HCT116 (cell line): ENCODE measurements at regions of chrX and their contacts with region 1.

Region 1: GRCh38 chrX:2451501-2452316 is 49.1 kb downstream of the DHRSX start:
- DNase-seq: peak; percentile 93
- ATAC-seq: peak; percentile 72
- H3K4me3 ChIP-seq: peak overlapping the region; percentile 25 to 50
- H3K27ac ChIP-seq: peak overlapping the region; percentile 93
- H3K4me1 ChIP-seq: peaks cover 12 to 50% of the 10 kb centered on the region in 2 experiments
- H3K27me3 ChIP-seq: no peaks in the 10 kb centered on the region
- CTCF ChIP-seq: no peak
- POLR2A ChIP-seq: no peak
- RAD21 ChIP-seq: no peak

Region 2: GRCh38 chrX:1649621-1650020 is 802.1 kb before region 1 on chrX:
- CTCF ChIA-PET with region 1: no interaction called
- POLR2A ChIA-PET with region 1: no interaction called
- RAD21 ChIA-PET with region 1: no interaction called
- intact Hi-C with region 1: loop called (anchors 5 kb)
- DNase-seq: no peak
- ATAC-seq: no peak
- H3K4me3 ChIP-seq: no peak overlapping the region
- H3K27ac ChIP-seq: no peak overlapping the region
- H3K4me1 ChIP-seq: peaks cover 0 to 2% of the 10 kb centered on the region in 2 experiments; a peak in 1 of 4 replicates
- H3K27me3 ChIP-seq: no peaks in the 10 kb centered on the region
- CTCF ChIP-seq: no peak
- POLR2A ChIP-seq: no peak
- RAD21 ChIP-seq: no peak

Region 3: GRCh38 chrX:1673337-1673736 is 778.4 kb before region 1 on chrX:
- CTCF ChIA-PET with region 1: no interaction called
- POLR2A ChIA-PET with region 1: no interaction called
- RAD21 ChIA-PET with region 1: no interaction called
- intact Hi-C with region 1: loop called (anchors 5 kb)
- DNase-seq: peak; percentile 46
- ATAC-seq: peak; percentile 77
- H3K4me3 ChIP-seq: no peak overlapping the region
- H3K27ac ChIP-seq: no peak overlapping the region
- H3K4me1 ChIP-seq: no peaks in the 10 kb centered on the region
- H3K27me3 ChIP-seq: no peaks in the 10 kb centered on the region
- CTCF ChIP-seq: peak; percentile 29 to 80 (median 72); a peak in 5 of 6 replicates
- POLR2A ChIP-seq: no peak
- RAD21 ChIP-seq: peak; percentile 79

Region 4: DNA sequence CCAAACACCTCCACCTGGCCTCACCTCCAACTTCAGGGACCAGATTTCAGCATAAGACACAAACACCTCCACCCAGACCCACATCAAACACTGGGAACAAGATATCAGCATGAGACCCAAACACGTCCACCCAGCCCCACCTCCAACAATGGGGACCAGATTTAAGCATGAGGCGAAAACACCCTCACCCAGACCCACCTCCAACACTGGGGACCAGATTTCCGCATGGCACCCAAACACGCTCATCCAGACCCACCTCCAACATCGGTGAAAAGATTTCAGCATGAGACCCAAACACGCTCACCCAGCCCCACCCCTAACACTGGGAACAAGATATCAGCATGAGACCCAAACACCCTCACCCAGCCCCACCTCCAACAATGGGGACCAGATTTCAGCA is 626.9 kb before region 1 on chrX:
- CTCF ChIA-PET with region 1: no interaction called
- POLR2A ChIA-PET with region 1: no interaction called
- RAD21 ChIA-PET with region 1: no interaction called
- intact Hi-C with region 1: no loop called
- DNase-seq: no peak
- ATAC-seq: no peak
- H3K4me3 ChIP-seq: no peak overlapping the region
- H3K27ac ChIP-seq: no peak overlapping the region
- H3K4me1 ChIP-seq: no peaks in the 10 kb centered on the region
- H3K27me3 ChIP-seq: no peaks in the 10 kb centered on the region
- CTCF ChIP-seq: no peak
- POLR2A ChIP-seq: no peak
- RAD21 ChIP-seq: no peak

Region 5: DNA sequence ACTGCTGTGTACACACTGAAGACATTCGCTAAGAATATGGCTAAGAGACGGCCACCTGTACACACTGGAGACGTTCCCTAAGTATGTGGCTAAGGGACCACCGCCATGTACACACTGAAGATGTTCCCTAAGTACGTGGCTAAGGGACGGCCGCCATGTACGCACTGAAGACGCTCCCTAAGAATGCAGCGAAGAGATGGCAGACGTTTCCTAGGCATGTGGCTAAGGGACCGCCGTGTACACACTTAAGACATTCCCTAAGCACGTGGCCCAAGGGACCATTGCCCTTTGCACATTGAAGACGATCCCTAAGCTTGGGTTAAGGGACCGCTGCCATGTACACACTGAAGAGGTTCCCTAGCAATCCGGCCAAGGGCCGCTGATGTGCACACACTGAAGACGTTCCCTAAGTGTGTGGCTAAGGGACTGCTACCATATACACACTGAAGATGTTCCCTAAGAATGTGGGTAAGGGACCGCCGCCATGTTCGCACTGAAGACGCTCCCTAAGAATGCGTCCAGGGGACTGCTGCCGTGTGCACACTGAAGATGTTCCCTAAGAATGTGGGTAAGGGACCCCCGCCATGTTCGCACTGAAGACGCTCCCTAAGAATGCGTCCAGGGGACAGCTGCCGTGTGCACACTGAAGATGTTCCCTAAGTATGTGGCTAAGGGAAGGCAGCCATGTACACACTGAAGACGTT is 12.4 kb after region 1 on chrX:
- CTCF ChIA-PET with region 1: no interaction called
- POLR2A ChIA-PET with region 1: no interaction called
- RAD21 ChIA-PET with region 1: no interaction called
- intact Hi-C with region 1: loop called (anchors 1 kb)
- DNase-seq: peak; percentile 99
- ATAC-seq: peak; percentile 71
- H3K4me3 ChIP-seq: peak overlapping the region; percentile 47 to 57
- H3K27ac ChIP-seq: peak overlapping the region; percentile 92
- H3K4me1 ChIP-seq: peaks cover 10 to 51% of the 10 kb centered on the region in 2 experiments; a peak in 3 of 4 replicates
- H3K27me3 ChIP-seq: no peaks in the 10 kb centered on the region
- CTCF ChIP-seq: no peak
- POLR2A ChIP-seq: no peak
- RAD21 ChIP-seq: no peak

Region 6: GRCh38 chrX:2500267-2501075 is 48.8 kb after region 1 on chrX and contains the starts of genes DHRSX and ZBED1:
- CTCF ChIA-PET with region 1: no interaction called
- POLR2A ChIA-PET with region 1: no interaction called
- RAD21 ChIA-PET with region 1: no interaction called
- intact Hi-C with region 1: no loop called
- DNase-seq: no peak
- ATAC-seq: peak; percentile 71
- H3K4me3 ChIP-seq: peak within 1 kb of the TSS; percentile 61 to 72
- H3K27ac ChIP-seq: peak within 1 kb of the TSS; percentile 72; the same call in 1 of the 2 replicates
- H3K4me1 ChIP-seq: peaks cover 3 to 6% of the 10 kb centered on the region in 2 experiments; a peak in 2 of 4 replicates
- H3K27me3 ChIP-seq: no peaks in the 10 kb centered on the region
- CTCF ChIP-seq: peak in 1 of 3 experiments; percentile 9; a peak in 1 of 6 replicates
- POLR2A ChIP-seq: no peak
- RAD21 ChIP-seq: peak; percentile 23; the same call in 1 of the 2 replicates
- total RNA-seq, gene DHRSX: 11.9 TPM
- total RNA-seq, gene ZBED1: 21.0 TPM